ENCODE measurements at regions of chr1 and their contacts with region 1.

Region 1: DNA sequence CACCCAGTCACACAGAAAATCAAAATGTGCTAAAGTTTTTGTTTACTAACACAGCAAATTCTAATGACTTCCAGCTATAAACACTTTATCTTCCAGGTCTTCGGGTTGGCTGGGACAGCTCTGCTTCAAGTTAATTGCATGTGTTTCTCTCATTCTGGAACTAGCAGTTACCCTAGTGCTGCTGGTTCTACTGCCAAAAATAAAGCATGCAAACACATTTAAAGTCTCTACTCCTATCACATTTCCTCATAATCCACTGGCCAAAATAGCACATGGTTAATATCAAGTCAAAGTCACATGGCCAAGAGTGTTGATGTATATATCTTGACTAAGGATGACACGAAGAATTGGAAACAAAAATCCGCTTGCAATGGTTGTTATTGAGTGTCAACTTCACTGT is 973.1 kb upstream of the ADGRL2 start:
- DNase-seq: no peak
- ATAC-seq: no peak
- H3K4me3 ChIP-seq: no peak overlapping the region
- H3K27ac ChIP-seq: no peak overlapping the region
- H3K4me1 ChIP-seq: no peaks in the 10 kb centered on the region
- H3K27me3 ChIP-seq: no peaks in the 10 kb centered on the region
- CTCF ChIP-seq: no peak
- EP300 ChIP-seq: no peak
- POLR2A ChIP-seq: no peak
- RAD21 ChIP-seq: no peak

Region 2: DNA sequence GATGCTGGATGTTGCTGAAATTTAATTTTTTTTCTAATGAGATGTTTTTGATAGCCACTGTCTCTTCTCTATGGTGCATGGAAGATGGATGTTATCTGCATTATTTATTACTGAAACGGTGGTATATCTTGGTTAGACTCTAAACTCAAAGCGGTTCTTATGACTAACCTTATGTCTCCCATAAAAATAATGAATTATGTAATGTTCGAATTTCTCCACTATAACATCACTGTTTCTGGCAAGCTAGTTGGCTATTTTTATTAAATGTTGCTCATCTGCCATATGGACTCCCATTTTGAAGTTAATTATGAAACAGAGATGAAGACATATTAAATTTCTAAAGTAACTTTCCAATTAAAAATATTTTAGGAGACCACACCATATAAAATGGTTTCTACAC is 1012.6 kb before region 1 on chr1:
- CTCF ChIA-PET with region 1: no interaction called
- POLR2A ChIA-PET with region 1: no interaction called
- in situ Hi-C with region 1: no loop called
- intact Hi-C with region 1: no loop called
- DNase-seq: no peak
- ATAC-seq: no peak
- H3K4me3 ChIP-seq: no peak overlapping the region
- H3K27ac ChIP-seq: no peak overlapping the region
- H3K4me1 ChIP-seq: no peaks in the 10 kb centered on the region
- H3K27me3 ChIP-seq: no peaks in the 10 kb centered on the region
- CTCF ChIP-seq: no peak
- EP300 ChIP-seq: no peak
- POLR2A ChIP-seq: no peak
- RAD21 ChIP-seq: no peak

Region 3: DNA sequence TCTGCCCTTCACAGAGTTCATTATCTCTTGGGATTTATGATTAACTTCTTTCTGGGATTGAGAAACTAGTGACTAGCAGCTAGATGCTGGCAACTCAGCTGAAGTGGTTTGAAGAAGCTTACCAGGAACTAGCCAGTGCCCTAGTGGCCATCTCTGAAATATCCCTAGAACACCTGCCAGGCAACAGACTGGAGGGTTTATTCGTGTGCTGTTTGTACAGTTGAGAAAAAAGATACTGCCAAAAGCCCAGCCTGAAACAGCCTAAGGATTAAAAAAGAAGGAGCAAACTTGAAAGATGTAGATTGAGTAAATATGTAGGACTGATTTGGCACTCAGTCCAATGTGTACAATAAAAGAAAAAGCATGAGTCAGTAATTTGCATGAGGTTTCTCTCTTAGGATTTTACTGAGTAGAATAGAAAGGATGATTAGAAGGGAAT is 171.6 kb before region 1 on chr1:
- CTCF ChIA-PET with region 1: no interaction called
- POLR2A ChIA-PET with region 1: no interaction called
- in situ Hi-C with region 1: no loop called
- intact Hi-C with region 1: no loop called
- DNase-seq: no peak
- ATAC-seq: no peak
- H3K4me3 ChIP-seq: no peak overlapping the region
- H3K27ac ChIP-seq: no peak overlapping the region
- H3K4me1 ChIP-seq: no peaks in the 10 kb centered on the region
- H3K27me3 ChIP-seq: no peaks in the 10 kb centered on the region
- CTCF ChIP-seq: no peak
- EP300 ChIP-seq: no peak
- POLR2A ChIP-seq: no peak
- RAD21 ChIP-seq: no peak

Region 4: GRCh38 chr1:80842796-80843195 is 15.1 kb after region 1 on chr1:
- CTCF ChIA-PET with region 1: no interaction called
- POLR2A ChIA-PET with region 1: no interaction called
- in situ Hi-C with region 1: no loop called
- intact Hi-C with region 1: no loop called
- DNase-seq: no peak
- ATAC-seq: no peak
- H3K4me3 ChIP-seq: no peak overlapping the region
- H3K27ac ChIP-seq: no peak overlapping the region
- H3K4me1 ChIP-seq: no peaks in the 10 kb centered on the region
- H3K27me3 ChIP-seq: no peaks in the 10 kb centered on the region
- CTCF ChIP-seq: no peak
- EP300 ChIP-seq: no peak
- POLR2A ChIP-seq: no peak
- RAD21 ChIP-seq: no peak

Region 5: DNA sequence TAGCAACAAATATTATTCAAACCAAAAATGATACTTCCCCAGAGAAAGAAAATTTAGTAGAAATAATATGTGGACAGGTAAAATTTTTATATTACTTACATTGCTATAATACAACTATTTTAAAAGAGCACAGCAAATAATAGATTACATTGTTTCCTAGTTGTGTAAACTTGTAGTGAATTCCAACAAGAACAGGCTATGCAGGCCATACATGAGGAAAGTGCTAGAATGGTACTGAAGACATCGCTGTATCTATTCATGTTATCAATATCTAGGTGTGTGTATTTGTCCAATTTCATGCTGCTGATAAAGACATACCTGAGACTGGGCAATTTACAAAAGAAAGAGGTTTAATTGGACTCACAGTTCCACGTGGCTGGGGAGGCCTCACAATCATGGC is 925.2 kb after region 1 on chr1:
- CTCF ChIA-PET with region 1: no interaction called
- POLR2A ChIA-PET with region 1: no interaction called
- in situ Hi-C with region 1: loop called (anchors 5 kb)
- intact Hi-C with region 1: no loop called
- DNase-seq: no peak
- ATAC-seq: no peak
- H3K4me3 ChIP-seq: no peak overlapping the region
- H3K27ac ChIP-seq: no peak overlapping the region
- H3K4me1 ChIP-seq: no peaks in the 10 kb centered on the region
- H3K27me3 ChIP-seq: no peaks in the 10 kb centered on the region
- CTCF ChIP-seq: no peak
- EP300 ChIP-seq: no peak
- POLR2A ChIP-seq: no peak
- RAD21 ChIP-seq: no peak